Pancreas (tissue), 10 donors: ENCODE measurements at regions of chr14 and their contacts with region 1.

Region 1: GRCh38 chr14:100440187-100440631 is 117.1 kb downstream of the SLC25A47 start:
- DNase-seq: peak; percentile 73 to 89 (median 82)
- ATAC-seq: peak; percentile 91 to 94 (median 92)
- H3K4me3 ChIP-seq: no peak overlapping the region
- H3K27ac ChIP-seq: peak overlapping the region in 1 of 4 donors; percentile 33
- H3K4me1 ChIP-seq: peaks cover 20 to 50% (median 24%) of the 10 kb centered on the region in 3 donors
- H3K27me3 ChIP-seq: no peaks in the 10 kb centered on the region
- CTCF ChIP-seq: peak; percentile 45 to 69 (median 57)

Region 2: GRCh38 chr14:100173353-100173752 is 266.9 kb before region 1 on chr14:
- intact Hi-C with region 1: no loop called
- DNase-seq: no peak
- ATAC-seq: no peak
- H3K4me3 ChIP-seq: no peak overlapping the region
- H3K27ac ChIP-seq: no peak overlapping the region
- H3K4me1 ChIP-seq: no peaks in the 10 kb centered on the region
- H3K27me3 ChIP-seq: no peaks in the 10 kb centered on the region
- CTCF ChIP-seq: no peak

Region 3: DNA sequence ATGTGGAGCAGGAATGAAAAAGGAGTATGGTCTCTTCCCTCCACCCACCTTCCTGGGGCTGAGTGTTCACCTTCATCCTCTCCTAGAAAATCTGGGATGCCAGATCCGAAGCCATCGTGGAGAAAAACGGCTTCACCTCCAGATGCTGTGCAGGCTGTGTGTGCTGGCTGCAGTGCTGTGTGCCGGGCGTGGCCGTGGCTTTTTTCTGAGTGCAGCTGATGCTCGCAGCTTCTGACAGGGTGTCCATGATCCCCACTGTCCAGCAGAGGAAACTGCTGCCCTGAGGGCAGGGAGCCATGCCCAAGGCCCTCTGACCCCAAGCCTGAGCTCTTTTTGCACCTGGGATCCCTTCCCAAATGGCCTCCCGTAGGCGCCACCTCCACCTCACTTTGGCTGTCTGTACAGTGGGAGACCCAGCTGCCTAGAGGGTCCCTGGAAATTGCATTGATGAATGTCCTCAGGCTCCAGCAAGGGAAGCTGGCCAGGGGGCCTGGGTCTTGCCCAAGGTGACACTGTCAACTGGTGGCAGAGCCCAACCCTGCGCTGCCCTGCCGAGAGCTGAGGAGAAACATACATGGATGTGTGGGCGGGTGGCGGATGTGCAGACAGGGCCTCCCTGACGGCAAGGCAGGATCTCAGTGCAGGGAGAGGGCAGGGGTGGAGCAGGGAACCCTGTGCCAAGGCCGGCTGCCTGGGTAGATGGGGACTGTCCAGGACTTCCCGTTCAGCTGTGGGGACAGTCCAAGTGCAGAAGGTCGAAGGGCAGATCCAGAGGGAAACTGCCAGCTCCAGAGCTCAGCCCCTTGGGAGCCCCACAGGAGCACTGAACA is 93.7 kb after region 1 on chr14:
- intact Hi-C with region 1: loop called in 1 of 3 experiments (anchors 10 kb)
- DNase-seq: peak; percentile 67 to 90 (median 78)
- ATAC-seq: peak; percentile 47 to 65 (median 60)
- H3K4me3 ChIP-seq: no peak overlapping the region
- H3K27ac ChIP-seq: peak overlapping the region; percentile 67 to 88 (median 76)
- H3K4me1 ChIP-seq: peaks cover 24 to 33% (median 28%) of the 10 kb centered on the region in 3 donors
- H3K27me3 ChIP-seq: no peaks in the 10 kb centered on the region
- CTCF ChIP-seq: no peak

Region 4: GRCh38 chr14:100994082-100994481 is 553.9 kb after region 1 on chr14:
- intact Hi-C with region 1: no loop called
- DNase-seq: no peak
- ATAC-seq: no peak
- H3K4me3 ChIP-seq: no peak overlapping the region
- H3K27ac ChIP-seq: no peak overlapping the region
- H3K4me1 ChIP-seq: no peaks in the 10 kb centered on the region
- H3K27me3 ChIP-seq: no peaks in the 10 kb centered on the region
- CTCF ChIP-seq: no peak